ENCODE measurements at regions of chr1 and their contacts with region 1.

Region 1: GRCh38 chr1:234612618-234613125 is 2.7 kb upstream of the IRF2BP2 start:
- DNase-seq: peak; percentile 93
- H3K27ac ChIP-seq: peak overlapping the region; percentile 98
- CTCF ChIP-seq: no peak

Region 2: GRCh38 chr1:234631721-234632125 is 19.1 kb after region 1 on chr1:
- CTCF ChIA-PET with region 1: no interaction called
- POLR2A ChIA-PET with region 1: no interaction called
- DNase-seq: peak; percentile 71
- H3K27ac ChIP-seq: no peak overlapping the region
- CTCF ChIP-seq: no peak

Region 3: DNA sequence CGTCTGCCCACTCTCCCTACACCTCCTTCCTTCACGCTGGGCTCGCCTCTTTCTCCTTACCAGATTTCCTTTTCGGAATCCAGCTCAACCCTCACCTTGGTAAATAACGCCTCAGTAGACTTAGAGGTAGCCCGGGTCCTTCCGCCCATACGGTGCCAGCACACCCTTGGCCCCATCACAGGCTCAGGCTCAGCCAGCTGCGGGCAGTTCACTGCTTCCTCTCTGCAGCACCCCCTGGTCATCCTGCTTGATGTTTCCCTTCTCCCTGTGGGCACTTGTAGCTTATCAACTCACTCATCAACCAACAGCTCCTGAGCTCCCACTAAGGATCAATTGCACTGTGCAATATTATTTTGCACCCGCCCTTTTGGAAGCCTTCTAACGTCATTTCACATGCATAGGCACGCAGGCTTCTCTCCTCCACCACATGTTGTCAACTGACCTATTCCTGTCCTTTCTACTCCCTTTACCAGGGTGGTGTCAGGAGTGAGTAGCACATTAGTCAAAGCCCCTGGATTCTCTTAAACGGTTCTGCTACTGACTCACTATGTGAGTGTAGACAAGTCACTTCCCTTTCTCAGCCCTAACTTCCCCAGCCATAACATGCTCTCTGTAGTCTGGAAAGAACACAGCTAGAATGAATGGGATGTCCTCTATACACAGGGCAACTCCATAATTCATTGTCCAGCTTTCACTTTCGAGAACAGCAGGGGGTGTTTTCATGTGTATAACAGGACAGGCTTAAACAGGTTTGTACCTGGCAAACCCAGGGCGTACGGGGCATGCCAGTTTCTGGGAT is 44.4 kb after region 1 on chr1:
- CTCF ChIA-PET with region 1: interaction called, 5 read pairs
- POLR2A ChIA-PET with region 1: interaction called, 24 read pairs
- DNase-seq: peak; percentile 98
- H3K27ac ChIP-seq: peak overlapping the region; percentile 98
- CTCF ChIP-seq: no peak

Region 4: DNA sequence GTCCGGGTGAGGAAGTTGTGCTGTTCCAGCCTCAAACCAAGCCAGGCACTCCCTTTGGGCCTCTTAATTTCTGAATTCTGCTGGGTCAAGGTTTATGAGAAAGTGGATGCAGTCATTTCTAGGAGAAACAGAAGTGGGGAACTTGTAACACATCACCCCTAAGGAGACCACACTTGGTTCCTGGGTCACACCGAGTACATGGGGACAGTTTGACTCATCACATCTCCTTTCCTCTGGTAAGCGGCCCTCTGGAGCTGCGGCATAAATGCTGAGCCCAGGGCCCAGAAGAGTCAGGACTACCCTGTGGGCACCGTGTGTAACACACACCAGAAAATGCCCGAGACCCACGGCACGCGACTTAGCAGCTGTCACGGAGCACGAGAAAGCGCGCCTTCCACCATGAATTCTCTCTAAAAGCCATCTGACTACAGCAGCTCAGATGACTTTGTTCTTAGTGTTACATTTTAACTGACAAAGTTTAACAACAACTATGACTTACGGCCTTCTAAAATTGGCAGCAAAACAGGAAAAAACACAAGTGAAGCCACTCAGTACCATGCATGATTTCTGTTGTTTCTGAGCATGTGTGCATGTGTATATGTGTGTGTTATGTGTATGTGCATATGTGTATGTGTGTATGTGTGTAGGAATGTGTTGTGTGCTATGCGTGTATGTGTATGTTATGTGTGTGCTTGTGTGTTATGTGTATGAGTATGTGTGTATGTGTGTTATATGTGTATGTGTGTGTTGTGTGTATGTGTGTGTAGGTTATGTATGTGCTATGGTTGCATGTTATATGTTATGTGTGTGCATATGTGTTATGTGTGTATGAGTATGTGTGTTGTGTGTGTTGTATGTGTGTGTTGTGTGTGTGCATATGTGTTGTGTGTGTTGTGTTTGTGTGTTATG is 465.2 kb after region 1 on chr1:
- CTCF ChIA-PET with region 1: no interaction called
- POLR2A ChIA-PET with region 1: interaction called, 10 read pairs
- DNase-seq: no peak
- H3K27ac ChIP-seq: peak overlapping the region; percentile 86
- CTCF ChIP-seq: no peak

Measured in RWPE1 (cell line).